B cell (primary cell): ENCODE measurements at regions of chr6 and their contacts with region 1.

Region 1: GRCh38 chr6:33570806-33571636 is 9.1 kb downstream of the BAK1 start:
- DNase-seq: peak; percentile 97
- ATAC-seq: peak; percentile 84
- H3K4me3 ChIP-seq: peak overlapping the region; percentile 61 to 99 (median 76)
- H3K4me3 Mint-ChIP-seq: peak overlapping the region; percentile 94
- H3K27ac ChIP-seq: peak overlapping the region; percentile 95 to 100
- H3K27ac Mint-ChIP-seq: peak overlapping the region; percentile 100
- H3K4me1 ChIP-seq: peaks cover 16 to 24% of the 10 kb centered on the region in 2 donors
- H3K4me1 Mint-ChIP-seq: peaks cover 31% of the 10 kb centered on the region
- H3K27me3 ChIP-seq: no peaks in the 10 kb centered on the region
- H3K27me3 Mint-ChIP-seq: no peaks in the 10 kb centered on the region
- CTCF ChIP-seq: no peak

Region 2: GRCh38 chr6:32177788-32178546 is 1393.1 kb before region 1 on chr6 and contains the start of gene RNF5:
- CTCF ChIA-PET with region 1: no interaction called
- POLR2A ChIA-PET with region 1: no interaction called
- intact Hi-C with region 1: loop called (anchors 5 kb)
- DNase-seq: peak; percentile 99
- ATAC-seq: peak; percentile 79
- H3K4me3 ChIP-seq: peak within 1 kb of the TSS; percentile 68 to 92 (median 75)
- H3K4me3 Mint-ChIP-seq: peak within 1 kb of the TSS; percentile 97
- H3K27ac ChIP-seq: peak within 1 kb of the TSS; percentile 97 to 98
- H3K27ac Mint-ChIP-seq: peak within 1 kb of the TSS; percentile 99
- H3K4me1 ChIP-seq: peaks cover 34 to 47% of the 10 kb centered on the region in 2 donors
- H3K4me1 Mint-ChIP-seq: peaks cover 68% of the 10 kb centered on the region
- H3K27me3 ChIP-seq: no peaks in the 10 kb centered on the region
- H3K27me3 Mint-ChIP-seq: no peaks in the 10 kb centered on the region
- CTCF ChIP-seq: no peak
- total RNA-seq, gene RNF5: 39.0 and 40.7 TPM in 2 replicates

Region 3: GRCh38 chr6:33417903-33418689 is 152.9 kb before region 1 on chr6 and contains the start of gene CUTA:
- CTCF ChIA-PET with region 1: interaction called, 3 read pairs
- POLR2A ChIA-PET with region 1: interaction called, 6 read pairs
- intact Hi-C with region 1: loop called (anchors 2 kb)
- DNase-seq: peak; percentile 100
- ATAC-seq: peak; percentile 89
- H3K4me3 ChIP-seq: peak within 1 kb of the TSS; percentile 58 to 84 (median 69)
- H3K4me3 Mint-ChIP-seq: peak within 1 kb of the TSS; percentile 96
- H3K27ac ChIP-seq: peak within 1 kb of the TSS; percentile 89 to 93
- H3K27ac Mint-ChIP-seq: peak within 1 kb of the TSS; percentile 97
- H3K4me1 ChIP-seq: peaks cover 40 to 65% of the 10 kb centered on the region in 2 donors
- H3K4me1 Mint-ChIP-seq: peaks cover 63% of the 10 kb centered on the region
- H3K27me3 ChIP-seq: peaks cover 0 to 3% (median 0%) of the 10 kb centered on the region in 4 experiments
- H3K27me3 Mint-ChIP-seq: peaks cover 4% of the 10 kb centered on the region
- CTCF ChIP-seq: peak; percentile 28
- total RNA-seq, gene CUTA: 134 and 137 TPM in 2 replicates

Region 4: GRCh38 chr6:33425668-33426577 is 145.1 kb before region 1 on chr6:
- CTCF ChIA-PET with region 1: interaction called, 7 read pairs
- POLR2A ChIA-PET with region 1: interaction called, 5 read pairs
- intact Hi-C with region 1: loop called (anchors 1 kb)
- DNase-seq: peak; percentile 83
- ATAC-seq: peak; percentile 59
- H3K4me3 ChIP-seq: peak overlapping the region; percentile 48 to 79 (median 62)
- H3K4me3 Mint-ChIP-seq: peak overlapping the region; percentile 92
- H3K27ac ChIP-seq: peak overlapping the region; percentile 78 to 86
- H3K27ac Mint-ChIP-seq: peak overlapping the region; percentile 91
- H3K4me1 ChIP-seq: peaks cover 50 to 56% of the 10 kb centered on the region in 2 donors
- H3K4me1 Mint-ChIP-seq: peaks cover 65% of the 10 kb centered on the region
- H3K27me3 ChIP-seq: no peaks in the 10 kb centered on the region
- H3K27me3 Mint-ChIP-seq: peaks cover 4% of the 10 kb centered on the region
- CTCF ChIP-seq: peak; percentile 25

Region 5: DNA sequence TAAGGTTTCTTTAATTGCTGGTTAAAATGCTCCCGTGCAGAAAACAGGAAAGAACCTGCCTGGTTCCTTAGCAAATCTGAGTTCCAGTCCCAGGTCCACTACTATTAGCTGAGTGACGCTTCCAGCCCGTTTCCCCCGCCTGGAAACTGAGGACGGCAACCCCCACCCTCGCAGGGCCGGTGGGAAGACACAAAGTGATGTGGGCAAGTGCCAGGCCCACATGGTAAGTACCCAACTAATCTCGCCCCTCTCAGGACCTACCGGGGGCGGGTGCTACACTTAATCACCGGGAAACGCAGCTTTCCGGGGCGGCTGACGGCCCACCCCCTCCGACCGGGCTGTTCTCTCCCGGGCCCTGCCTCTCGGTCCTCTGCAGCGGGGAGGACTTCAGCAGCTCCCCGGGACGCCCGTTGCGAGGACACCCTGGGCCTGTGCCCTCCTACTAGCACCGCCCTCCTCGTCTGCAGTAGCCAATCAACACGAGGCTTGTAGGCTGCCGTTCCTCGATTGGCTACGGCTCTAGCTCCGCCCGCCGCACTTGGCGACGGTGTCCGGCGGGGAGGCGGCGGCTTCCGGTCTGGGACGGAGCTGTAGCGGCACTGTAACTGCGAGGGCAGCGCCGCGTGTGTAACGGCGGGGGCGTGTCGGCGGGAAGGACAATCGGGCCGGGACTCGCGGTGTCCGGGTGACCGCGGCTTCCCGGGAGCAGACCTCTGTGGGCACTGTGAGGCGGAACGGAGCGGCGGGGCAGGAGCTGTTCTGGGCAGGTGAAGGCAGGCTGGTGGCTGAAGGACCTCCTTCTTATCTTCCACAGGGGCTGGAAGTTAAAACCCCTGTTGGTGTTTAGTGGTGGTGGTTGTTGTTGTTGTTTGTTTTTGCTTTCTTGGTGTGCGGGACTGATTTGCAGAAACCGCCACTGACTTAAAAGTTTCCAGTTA is 116.7 kb before region 1 on chr6 and contains the start of gene ZBTB9:
- CTCF ChIA-PET with region 1: interaction called, 5 read pairs
- POLR2A ChIA-PET with region 1: interaction called, 7 read pairs
- intact Hi-C with region 1: loop called (anchors 1 kb)
- DNase-seq: peak; percentile 94
- ATAC-seq: peak; percentile 100
- H3K4me3 ChIP-seq: peak within 1 kb of the TSS; percentile 77 to 94 (median 81)
- H3K4me3 Mint-ChIP-seq: peak within 1 kb of the TSS; percentile 99
- H3K27ac ChIP-seq: peak within 1 kb of the TSS; percentile 57 to 84
- H3K27ac Mint-ChIP-seq: peak within 1 kb of the TSS; percentile 93
- H3K4me1 ChIP-seq: peaks cover 12 to 21% of the 10 kb centered on the region in 2 donors
- H3K4me1 Mint-ChIP-seq: peaks cover 32% of the 10 kb centered on the region
- H3K27me3 ChIP-seq: no peaks in the 10 kb centered on the region
- H3K27me3 Mint-ChIP-seq: no peaks in the 10 kb centered on the region
- CTCF ChIP-seq: no peak
- total RNA-seq, gene ZBTB9: 10.4 and 11.8 TPM in 2 replicates

Region 6: DNA sequence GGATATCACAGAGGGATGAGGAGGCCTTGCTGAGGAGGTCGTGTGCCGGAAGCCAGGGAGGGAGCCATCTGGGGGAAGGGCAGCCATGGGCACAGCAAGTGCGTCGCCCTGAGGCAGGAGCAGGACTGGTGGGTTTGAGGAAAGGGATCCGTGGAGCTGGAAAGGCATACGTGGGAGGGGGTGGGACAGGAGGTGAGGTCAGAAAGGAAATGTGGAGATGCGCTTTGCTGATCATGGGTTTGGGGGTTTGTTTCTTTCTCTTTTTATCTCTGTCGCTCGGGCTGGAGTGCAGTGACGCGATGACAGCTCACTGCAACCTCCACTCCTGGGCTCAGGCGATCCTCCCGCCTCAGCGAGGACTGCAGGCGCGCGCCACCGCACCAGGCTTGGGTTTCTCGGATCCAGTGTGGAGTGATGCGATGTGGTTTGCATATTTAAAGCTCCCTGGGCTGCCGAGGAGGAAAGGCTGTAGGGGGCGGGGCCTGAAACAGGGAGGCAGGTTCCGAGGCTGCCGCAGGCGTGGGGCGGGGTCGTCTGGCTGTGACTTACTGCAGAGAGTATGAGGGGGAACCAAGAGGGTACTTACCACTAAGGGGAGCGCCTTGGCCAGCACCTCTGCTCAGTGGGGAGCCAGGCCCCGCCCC is 21.5 kb after region 1 on chr6:
- CTCF ChIA-PET with region 1: interaction called, 3 read pairs
- POLR2A ChIA-PET with region 1: interaction called, 7 read pairs
- intact Hi-C with region 1: loop called (anchors 1 kb)
- DNase-seq: peak; percentile 91
- ATAC-seq: peak; percentile 50
- H3K4me3 ChIP-seq: peak overlapping the region in 4 of 5 experiments; percentile 38 to 67 (median 42)
- H3K4me3 Mint-ChIP-seq: peak overlapping the region; percentile 81
- H3K27ac ChIP-seq: peak overlapping the region; percentile 94 to 100
- H3K27ac Mint-ChIP-seq: peak overlapping the region; percentile 100
- H3K4me1 ChIP-seq: peaks cover 50 to 61% of the 10 kb centered on the region in 2 donors
- H3K4me1 Mint-ChIP-seq: peaks cover 68% of the 10 kb centered on the region
- H3K27me3 ChIP-seq: no peaks in the 10 kb centered on the region
- H3K27me3 Mint-ChIP-seq: no peaks in the 10 kb centered on the region
- CTCF ChIP-seq: no peak

Region 7: DNA sequence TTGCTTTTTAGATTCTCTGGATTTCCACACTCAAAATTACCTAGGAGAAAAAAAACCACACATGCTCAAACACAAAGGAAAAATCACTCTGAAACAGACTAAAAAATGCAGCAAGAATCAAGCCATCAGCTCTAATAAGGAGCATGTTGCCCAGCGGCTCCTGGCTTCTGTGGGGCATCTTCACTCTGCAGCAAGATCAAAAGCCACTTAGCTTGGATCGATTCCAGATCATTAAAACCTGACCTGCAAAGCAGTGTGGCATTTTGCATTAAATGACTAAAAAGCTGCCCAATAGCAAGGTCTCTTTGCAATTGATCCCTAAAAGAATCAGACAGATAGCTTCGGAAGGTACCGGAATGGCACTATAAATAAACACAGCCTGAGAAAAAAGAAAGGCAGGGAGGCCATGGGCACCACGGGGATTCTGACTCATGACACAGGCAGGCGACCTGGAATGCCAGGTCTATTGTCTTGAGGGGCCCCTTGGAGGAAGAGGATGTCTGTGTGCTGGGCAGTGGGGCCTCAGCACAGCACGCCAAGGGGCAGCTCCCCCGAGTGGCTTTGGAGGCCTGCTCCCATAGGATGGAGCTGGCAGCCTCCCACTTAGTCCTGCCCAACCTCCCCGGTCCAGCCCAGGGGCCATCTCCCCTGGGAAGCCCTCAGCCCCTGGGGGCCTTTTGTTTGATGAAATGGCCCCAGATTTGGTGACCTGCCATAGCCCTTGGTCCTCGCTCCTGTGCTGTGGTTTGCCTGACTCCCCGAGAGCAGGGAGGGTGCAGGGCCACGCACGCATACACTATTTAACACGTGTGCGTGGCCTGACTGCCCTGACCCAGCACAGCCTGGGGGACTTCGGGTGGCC is 210.3 kb after region 1 on chr6:
- CTCF ChIA-PET with region 1: no interaction called
- POLR2A ChIA-PET with region 1: no interaction called
- intact Hi-C with region 1: no loop called
- DNase-seq: no peak
- ATAC-seq: no peak
- H3K4me3 ChIP-seq: no peak overlapping the region
- H3K4me3 Mint-ChIP-seq: no peak overlapping the region
- H3K27ac ChIP-seq: no peak overlapping the region
- H3K27ac Mint-ChIP-seq: no peak overlapping the region
- H3K4me1 ChIP-seq: peaks cover 14% of the 10 kb centered on the region in 2 donors
- H3K4me1 Mint-ChIP-seq: peaks cover 24% of the 10 kb centered on the region
- H3K27me3 ChIP-seq: no peaks in the 10 kb centered on the region
- H3K27me3 Mint-ChIP-seq: no peaks in the 10 kb centered on the region
- CTCF ChIP-seq: no peak